CD4-positive, alpha-beta T cell (primary cell): ENCODE measurements at regions of chr20 and their contacts with region 1.

Region 1: GRCh38 chr20:31723319-31724078 is 831 bp upstream of the BCL2L1 start:
- DNase-seq: peak; percentile 91 to 99 (median 97)
- ATAC-seq: peak; percentile 92
- H3K4me3 ChIP-seq: peak overlapping the region; percentile 99
- H3K4me3 Mint-ChIP-seq: peak overlapping the region; percentile 97
- H3K27ac ChIP-seq: peak overlapping the region; percentile 92 to 96
- H3K27ac Mint-ChIP-seq: peak overlapping the region; percentile 87
- H3K4me1 ChIP-seq: peaks cover 44% of the 10 kb centered on the region
- H3K4me1 Mint-ChIP-seq: peaks cover 44% of the 10 kb centered on the region
- H3K27me3 ChIP-seq: no peaks in the 10 kb centered on the region
- H3K27me3 Mint-ChIP-seq: no peaks in the 10 kb centered on the region
- CTCF ChIP-seq: peak; percentile 85

Region 2: GRCh38 chr20:31363295-31363694 is 360.2 kb before region 1 on chr20:
- CTCF ChIA-PET with region 1: no interaction called
- POLR2A ChIA-PET with region 1: no interaction called
- intact Hi-C with region 1: no loop called
- DNase-seq: no peak
- ATAC-seq: no peak
- H3K4me3 ChIP-seq: no peak overlapping the region
- H3K4me3 Mint-ChIP-seq: no peak overlapping the region
- H3K27ac ChIP-seq: no peak overlapping the region
- H3K27ac Mint-ChIP-seq: no peak overlapping the region
- H3K4me1 ChIP-seq: no peaks in the 10 kb centered on the region
- H3K4me1 Mint-ChIP-seq: no peaks in the 10 kb centered on the region
- H3K27me3 ChIP-seq: no peaks in the 10 kb centered on the region
- H3K27me3 Mint-ChIP-seq: no peaks in the 10 kb centered on the region
- CTCF ChIP-seq: no peak

Region 3: GRCh38 chr20:31560094-31560899 is 163.2 kb before region 1 on chr20:
- CTCF ChIA-PET with region 1: interaction called, 3 read pairs
- POLR2A ChIA-PET with region 1: interaction called, 4 read pairs
- intact Hi-C with region 1: loop called in 1 of 2 experiments (anchors 1 kb)
- DNase-seq: peak; percentile 63 to 86 (median 72)
- ATAC-seq: peak; percentile 80
- H3K4me3 ChIP-seq: no peak overlapping the region
- H3K4me3 Mint-ChIP-seq: no peak overlapping the region
- H3K27ac ChIP-seq: no peak overlapping the region
- H3K27ac Mint-ChIP-seq: peak overlapping the region; percentile 49
- H3K4me1 ChIP-seq: peaks cover 14% of the 10 kb centered on the region
- H3K4me1 Mint-ChIP-seq: peaks cover 13% of the 10 kb centered on the region
- H3K27me3 ChIP-seq: no peaks in the 10 kb centered on the region
- H3K27me3 Mint-ChIP-seq: no peaks in the 10 kb centered on the region
- CTCF ChIP-seq: peak; percentile 86

Region 4: GRCh38 chr20:31605031-31605901 is 118.2 kb before region 1 on chr20 and contains the start of gene ID1:
- CTCF ChIA-PET with region 1: interaction called, 4 read pairs
- POLR2A ChIA-PET with region 1: interaction called, 6 read pairs
- intact Hi-C with region 1: loop called in 1 of 2 experiments (anchors 5 kb)
- DNase-seq: peak; percentile 75 to 94 (median 86)
- ATAC-seq: peak; percentile 93
- H3K4me3 ChIP-seq: peak within 1 kb of the TSS; percentile 68
- H3K4me3 Mint-ChIP-seq: peak within 1 kb of the TSS; percentile 94
- H3K27ac ChIP-seq: no peak within 1 kb of the TSS
- H3K27ac Mint-ChIP-seq: peak within 1 kb of the TSS; percentile 74
- H3K4me1 ChIP-seq: peaks cover 33% of the 10 kb centered on the region
- H3K4me1 Mint-ChIP-seq: peaks cover 25% of the 10 kb centered on the region
- H3K27me3 ChIP-seq: peaks cover 38 to 43% of the 10 kb centered on the region in 2 experiments
- H3K27me3 Mint-ChIP-seq: peaks cover 63% of the 10 kb centered on the region
- CTCF ChIP-seq: no peak
- total RNA-seq, gene ID1: 22.8 to 24.2 TPM

Region 5: DNA sequence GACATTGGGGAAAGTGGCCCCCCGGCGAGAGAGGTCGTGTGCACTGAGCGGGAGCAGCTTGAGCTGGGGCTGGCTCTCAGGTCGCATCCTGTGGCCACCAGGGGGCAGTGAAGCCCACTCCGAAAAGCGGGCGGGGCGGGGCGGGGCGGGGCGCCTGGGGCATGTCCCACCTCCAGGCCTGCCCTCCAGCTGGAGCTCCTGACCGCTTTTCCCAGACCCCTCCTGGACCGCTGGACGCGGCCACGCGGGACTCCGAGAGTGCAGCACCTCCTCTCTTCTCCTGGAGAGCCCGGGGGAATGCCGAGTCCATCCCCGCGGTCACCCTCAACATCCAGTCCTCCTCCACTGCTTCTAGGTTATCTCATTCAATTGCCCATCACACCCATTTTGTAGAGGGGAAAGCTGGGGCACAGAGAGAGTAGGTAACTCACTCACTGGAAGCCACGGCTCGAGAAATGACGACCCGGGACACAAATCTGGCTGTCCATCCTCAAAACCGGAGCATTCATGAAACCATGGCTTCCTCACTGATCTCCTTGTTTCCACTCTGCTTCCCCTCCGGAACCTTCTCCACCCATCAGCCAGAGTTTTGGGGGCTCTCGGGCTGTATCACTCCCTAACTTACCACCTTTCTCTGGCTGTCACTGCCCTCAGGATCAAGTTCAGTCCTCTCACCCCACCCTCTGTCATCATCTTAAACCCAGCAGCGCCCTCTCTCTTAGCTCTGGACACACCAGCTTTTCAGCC is 61.7 kb before region 1 on chr20:
- CTCF ChIA-PET with region 1: interaction called, 197 read pairs
- POLR2A ChIA-PET with region 1: interaction called, 114 read pairs
- intact Hi-C with region 1: loop called (anchors 1 kb)
- DNase-seq: peak; percentile 68 to 91 (median 77)
- ATAC-seq: peak; percentile 92
- H3K4me3 ChIP-seq: peak overlapping the region; percentile 58
- H3K4me3 Mint-ChIP-seq: peak overlapping the region; percentile 84
- H3K27ac ChIP-seq: no peak overlapping the region
- H3K27ac Mint-ChIP-seq: peak overlapping the region; percentile 50
- H3K4me1 ChIP-seq: peaks cover 21% of the 10 kb centered on the region
- H3K4me1 Mint-ChIP-seq: peaks cover 25% of the 10 kb centered on the region
- H3K27me3 ChIP-seq: no peaks in the 10 kb centered on the region
- H3K27me3 Mint-ChIP-seq: no peaks in the 10 kb centered on the region
- CTCF ChIP-seq: peak; percentile 81

Region 6: DNA sequence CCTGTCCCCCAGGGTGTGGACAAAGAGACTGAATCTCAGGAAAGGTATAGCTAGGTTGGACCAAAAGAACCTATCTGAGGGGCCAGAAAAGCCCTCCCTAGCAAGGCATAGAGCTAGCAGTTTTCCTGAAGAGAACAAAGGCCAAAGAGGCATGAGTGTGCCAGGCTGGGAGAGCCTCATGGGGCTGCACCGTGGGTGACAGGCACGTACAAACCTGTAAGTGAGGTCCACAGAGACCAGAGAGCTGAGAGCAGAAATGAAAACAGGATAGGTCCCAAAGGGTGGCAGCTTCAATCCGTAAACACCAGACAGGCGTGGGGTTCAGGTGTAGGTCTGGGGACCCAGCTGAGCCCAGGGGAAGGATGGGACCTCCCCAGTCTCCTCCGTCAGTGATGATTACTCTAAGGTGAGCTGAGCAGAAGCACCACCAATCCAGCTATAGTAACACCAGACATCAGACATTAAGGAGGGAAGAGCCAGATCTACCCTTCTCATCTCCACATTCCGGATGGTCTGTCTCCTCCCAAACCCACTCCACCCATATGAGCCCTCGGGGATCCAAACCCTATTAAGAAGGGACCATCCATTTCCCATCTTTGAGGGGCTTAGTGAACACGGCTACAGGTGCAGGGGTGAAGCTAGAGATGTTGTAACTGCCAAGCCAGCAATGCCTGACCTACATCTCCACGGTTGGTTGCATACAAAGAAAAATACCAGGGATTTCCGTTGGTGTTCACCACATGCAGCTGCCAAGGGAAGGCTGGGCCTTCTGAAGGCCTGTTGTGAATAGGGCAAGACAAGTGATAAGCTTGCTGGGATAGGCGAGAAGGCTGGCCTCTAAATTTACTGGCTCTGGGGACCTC is 39.1 kb before region 1 on chr20:
- CTCF ChIA-PET with region 1: interaction called, 17 read pairs
- POLR2A ChIA-PET with region 1: interaction called, 7 read pairs
- intact Hi-C with region 1: loop called (anchors 5 kb)
- DNase-seq: peak in 4 of 14 experiments; percentile 7 to 67 (median 54)
- ATAC-seq: peak; percentile 56
- H3K4me3 ChIP-seq: no peak overlapping the region
- H3K4me3 Mint-ChIP-seq: no peak overlapping the region
- H3K27ac ChIP-seq: peak overlapping the region in 1 of 2 donors; percentile 1
- H3K27ac Mint-ChIP-seq: peak overlapping the region; percentile 78
- H3K4me1 ChIP-seq: peaks cover 71% of the 10 kb centered on the region
- H3K4me1 Mint-ChIP-seq: peaks cover 72% of the 10 kb centered on the region
- H3K27me3 ChIP-seq: no peaks in the 10 kb centered on the region
- H3K27me3 Mint-ChIP-seq: no peaks in the 10 kb centered on the region
- CTCF ChIP-seq: no peak

Region 7: GRCh38 chr20:31738729-31739561 is 15.4 kb after region 1 on chr20 and contains the start of gene TPX2:
- CTCF ChIA-PET with region 1: interaction called, 14 read pairs
- POLR2A ChIA-PET with region 1: interaction called, 17 read pairs
- intact Hi-C with region 1: no loop called
- DNase-seq: peak; percentile 56 to 91 (median 78)
- ATAC-seq: peak; percentile 93
- H3K4me3 ChIP-seq: peak within 1 kb of the TSS; percentile 73
- H3K4me3 Mint-ChIP-seq: no peak within 1 kb of the TSS
- H3K27ac ChIP-seq: no peak within 1 kb of the TSS
- H3K27ac Mint-ChIP-seq: no peak within 1 kb of the TSS
- H3K4me1 ChIP-seq: peaks cover 18% of the 10 kb centered on the region
- H3K4me1 Mint-ChIP-seq: no peaks in the 10 kb centered on the region
- H3K27me3 ChIP-seq: no peaks in the 10 kb centered on the region
- H3K27me3 Mint-ChIP-seq: no peaks in the 10 kb centered on the region
- CTCF ChIP-seq: no peak
- total RNA-seq, gene TPX2: 0.85 to 0.89 TPM

Region 8: DNA sequence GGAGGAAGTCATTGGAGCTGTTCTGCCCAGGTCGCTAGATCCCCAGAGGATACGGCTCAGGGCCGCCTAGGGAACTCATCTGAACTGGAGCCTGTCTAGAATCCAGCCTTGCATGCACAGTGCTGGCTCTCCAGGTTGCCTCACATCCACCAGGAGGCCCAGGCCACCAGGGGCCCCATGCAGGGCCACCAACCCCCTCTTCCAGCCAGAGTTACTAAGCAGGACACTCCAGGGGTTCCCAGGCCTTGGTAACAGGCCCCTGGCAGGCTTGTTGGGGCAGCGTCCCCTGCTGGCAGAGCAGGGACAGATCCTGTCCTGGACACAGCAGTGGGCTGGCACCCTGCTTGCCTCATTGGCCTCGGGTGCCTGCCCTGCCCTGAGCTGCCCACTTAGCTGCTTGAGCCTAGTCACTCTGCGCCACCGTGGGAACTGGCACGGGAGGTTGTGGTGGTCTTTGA is 1170.6 kb after region 1 on chr20:
- CTCF ChIA-PET with region 1: no interaction called
- POLR2A ChIA-PET with region 1: no interaction called
- intact Hi-C with region 1: no loop called
- DNase-seq: peak in 1 of 14 experiments; percentile 29
- ATAC-seq: no peak
- H3K4me3 ChIP-seq: no peak overlapping the region
- H3K4me3 Mint-ChIP-seq: no peak overlapping the region
- H3K27ac ChIP-seq: no peak overlapping the region
- H3K27ac Mint-ChIP-seq: no peak overlapping the region
- H3K4me1 ChIP-seq: no peaks in the 10 kb centered on the region
- H3K4me1 Mint-ChIP-seq: no peaks in the 10 kb centered on the region
- H3K27me3 ChIP-seq: no peaks in the 10 kb centered on the region
- H3K27me3 Mint-ChIP-seq: no peaks in the 10 kb centered on the region
- CTCF ChIP-seq: no peak